Mammary epithelial cell (primary cell): ENCODE measurements at regions of chr22 and their contacts with region 1.

Region 1: GRCh38 chr22:22316589-22316988 is 72.0 kb downstream of the VPREB1 start:
- DNase-seq: no peak
- H3K4me3 ChIP-seq: no peak overlapping the region
- H3K27ac ChIP-seq: no peak overlapping the region
- H3K4me1 ChIP-seq: no peaks in the 10 kb centered on the region
- H3K27me3 ChIP-seq: no peaks in the 10 kb centered on the region
- CTCF ChIP-seq: no peak

Region 2: DNA sequence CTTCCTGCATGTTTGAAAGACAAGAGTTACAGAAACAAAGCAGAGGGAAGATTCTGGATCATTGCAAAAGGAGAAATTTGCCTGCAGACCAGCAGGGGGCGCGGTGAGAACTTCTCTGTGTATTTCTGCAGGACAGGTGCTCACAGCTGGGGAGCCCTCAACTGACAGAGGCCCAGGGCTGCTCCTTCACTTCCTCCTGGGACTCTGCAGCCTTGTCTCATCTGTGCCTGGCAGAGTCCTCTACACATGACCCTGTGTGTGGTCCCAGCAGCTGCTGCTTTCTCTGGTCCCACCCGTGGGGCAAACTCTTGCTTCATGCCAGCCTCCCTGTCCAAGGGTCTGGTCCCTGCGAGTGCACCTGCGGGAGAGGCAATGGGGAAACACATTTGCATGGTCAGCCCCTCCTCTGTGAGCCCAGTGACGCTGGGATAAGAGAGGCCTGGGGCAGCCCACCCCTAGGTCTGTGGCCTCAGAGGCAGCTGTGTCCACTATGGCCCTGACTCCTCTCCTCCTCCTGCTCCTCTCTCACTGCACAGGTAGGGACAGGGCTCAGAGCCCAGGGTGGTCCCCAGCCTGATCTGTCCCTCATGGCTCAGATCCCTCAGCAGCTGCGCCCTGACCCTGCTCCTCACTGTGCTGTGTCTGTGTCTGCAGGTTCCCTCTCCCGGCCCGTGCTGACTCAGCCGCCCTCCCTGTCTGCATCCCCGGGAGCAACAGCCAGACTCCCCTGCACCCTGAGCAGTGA is 115.2 kb before region 1 on chr22:
- CTCF ChIA-PET with region 1: no interaction called
- dilution Hi-C with region 1: loop called (anchors 5 kb)
- in situ Hi-C with region 1: no loop called
- intact Hi-C with region 1: no loop called
- DNase-seq: no peak
- H3K4me3 ChIP-seq: no peak overlapping the region
- H3K27ac ChIP-seq: no peak overlapping the region
- H3K4me1 ChIP-seq: no peaks in the 10 kb centered on the region
- H3K27me3 ChIP-seq: no peaks in the 10 kb centered on the region
- CTCF ChIP-seq: peak; percentile 89 to 91

Region 3: GRCh38 chr22:22248878-22249277 is 67.7 kb before region 1 on chr22:
- CTCF ChIA-PET with region 1: no interaction called
- dilution Hi-C with region 1: loop called (anchors 5 kb)
- in situ Hi-C with region 1: no loop called
- intact Hi-C with region 1: no loop called
- DNase-seq: no peak
- H3K4me3 ChIP-seq: no peak overlapping the region
- H3K27ac ChIP-seq: no peak overlapping the region
- H3K4me1 ChIP-seq: no peaks in the 10 kb centered on the region
- H3K27me3 ChIP-seq: no peaks in the 10 kb centered on the region
- CTCF ChIP-seq: no peak

Region 4: GRCh38 chr22:22348127-22348814 is 31.7 kb after region 1 on chr22:
- CTCF ChIA-PET with region 1: no interaction called
- dilution Hi-C with region 1: loop called (anchors 5 kb)
- in situ Hi-C with region 1: no loop called
- intact Hi-C with region 1: no loop called
- DNase-seq: no peak
- H3K4me3 ChIP-seq: no peak overlapping the region
- H3K27ac ChIP-seq: no peak overlapping the region
- H3K4me1 ChIP-seq: no peaks in the 10 kb centered on the region
- H3K27me3 ChIP-seq: no peaks in the 10 kb centered on the region
- CTCF ChIP-seq: peak in 1 of 2 donors; percentile 34